Panc1 (cell line): ENCODE measurements at regions of chr11 and their contacts with region 1.

Region 1: DNA sequence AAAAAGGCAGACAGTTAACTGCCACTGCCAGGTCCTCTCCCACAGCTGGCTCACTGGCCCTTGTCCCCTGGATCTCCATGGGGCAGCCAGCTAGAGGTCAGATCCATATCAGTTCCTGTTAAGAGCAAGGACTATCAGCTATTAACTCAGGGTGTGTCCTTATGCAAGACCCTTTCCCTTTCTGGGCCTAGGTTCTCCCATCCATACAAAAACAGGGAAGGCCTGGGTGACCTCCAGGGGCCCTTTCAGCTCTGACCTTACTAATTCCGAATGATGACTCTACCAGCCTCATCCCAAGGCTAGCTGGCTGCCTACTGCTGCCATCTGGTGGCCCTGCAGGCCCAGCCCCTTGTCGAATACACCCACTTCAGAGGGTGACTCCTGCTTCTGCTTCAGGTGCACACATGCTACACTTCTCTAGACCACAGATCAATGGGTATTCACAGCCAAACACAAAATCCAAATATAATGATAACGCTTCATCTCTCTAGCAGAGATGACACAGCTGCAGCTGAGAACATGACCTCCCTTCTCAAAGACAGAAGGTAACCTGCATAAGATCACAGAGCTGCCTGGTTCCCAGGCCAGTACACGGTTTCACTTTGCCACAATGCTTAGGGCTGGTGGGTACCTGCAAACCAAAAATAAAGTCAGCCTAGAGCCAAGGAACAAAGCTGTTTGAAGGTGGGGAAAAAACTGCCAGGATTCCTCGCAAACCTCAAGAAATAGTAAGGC is 34.1 kb downstream of the SERGEF start:
- DNase-seq: peak; percentile 22
- ATAC-seq: peak; percentile 90
- H3K4me3 ChIP-seq: no peak overlapping the region
- H3K27ac ChIP-seq: no peak overlapping the region
- H3K4me1 ChIP-seq: no peaks in the 10 kb centered on the region
- H3K27me3 ChIP-seq: no peaks in the 10 kb centered on the region
- CTCF ChIP-seq: peak; percentile 87

Region 2: DNA sequence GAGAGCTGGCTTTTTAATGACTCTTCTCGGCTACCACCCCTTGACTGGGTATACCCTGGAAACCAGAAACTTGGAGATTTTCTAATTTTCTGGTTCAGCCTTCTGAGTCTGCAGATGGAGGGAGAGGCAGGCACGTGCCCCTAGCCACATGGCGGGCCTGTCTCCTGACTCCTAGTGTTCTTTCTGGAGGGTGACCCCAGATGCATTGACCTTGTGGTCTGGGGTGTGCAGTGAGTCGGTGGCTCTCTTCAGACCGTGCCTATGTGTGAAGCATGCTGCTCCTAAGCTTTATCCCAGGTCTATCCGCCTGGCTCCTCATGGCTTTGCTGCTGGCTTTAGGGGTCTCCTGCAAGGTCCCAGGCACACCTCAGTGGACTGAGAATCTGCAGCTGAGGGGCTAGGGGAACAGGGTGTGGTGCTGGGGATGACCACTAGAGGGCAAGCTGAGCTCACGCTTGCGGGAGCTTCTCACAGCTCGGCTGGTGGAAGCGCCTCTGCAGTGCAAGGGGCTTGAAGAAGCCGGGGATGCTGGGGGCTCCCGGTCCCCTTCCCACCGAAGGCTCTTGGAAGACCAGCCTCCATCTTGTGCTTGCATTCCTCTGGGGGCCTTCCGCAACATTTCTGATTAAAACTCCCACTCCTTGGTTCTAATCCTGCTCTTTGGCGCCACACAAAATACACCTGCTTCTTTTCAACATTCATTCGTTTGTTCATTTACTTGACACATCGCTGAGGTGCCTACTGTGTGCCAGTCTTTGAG is 379.8 kb before region 1 on chr11:
- CTCF ChIA-PET with region 1: interaction called, 6 read pairs
- POLR2A ChIA-PET with region 1: no interaction called
- in situ Hi-C with region 1: no loop called
- intact Hi-C with region 1: loop called (anchors 5 kb)
- DNase-seq: peak; percentile 55
- ATAC-seq: peak; percentile 92
- H3K4me3 ChIP-seq: no peak overlapping the region
- H3K27ac ChIP-seq: no peak overlapping the region
- H3K4me1 ChIP-seq: no peaks in the 10 kb centered on the region
- H3K27me3 ChIP-seq: no peaks in the 10 kb centered on the region
- CTCF ChIP-seq: peak; percentile 96

Region 3: DNA sequence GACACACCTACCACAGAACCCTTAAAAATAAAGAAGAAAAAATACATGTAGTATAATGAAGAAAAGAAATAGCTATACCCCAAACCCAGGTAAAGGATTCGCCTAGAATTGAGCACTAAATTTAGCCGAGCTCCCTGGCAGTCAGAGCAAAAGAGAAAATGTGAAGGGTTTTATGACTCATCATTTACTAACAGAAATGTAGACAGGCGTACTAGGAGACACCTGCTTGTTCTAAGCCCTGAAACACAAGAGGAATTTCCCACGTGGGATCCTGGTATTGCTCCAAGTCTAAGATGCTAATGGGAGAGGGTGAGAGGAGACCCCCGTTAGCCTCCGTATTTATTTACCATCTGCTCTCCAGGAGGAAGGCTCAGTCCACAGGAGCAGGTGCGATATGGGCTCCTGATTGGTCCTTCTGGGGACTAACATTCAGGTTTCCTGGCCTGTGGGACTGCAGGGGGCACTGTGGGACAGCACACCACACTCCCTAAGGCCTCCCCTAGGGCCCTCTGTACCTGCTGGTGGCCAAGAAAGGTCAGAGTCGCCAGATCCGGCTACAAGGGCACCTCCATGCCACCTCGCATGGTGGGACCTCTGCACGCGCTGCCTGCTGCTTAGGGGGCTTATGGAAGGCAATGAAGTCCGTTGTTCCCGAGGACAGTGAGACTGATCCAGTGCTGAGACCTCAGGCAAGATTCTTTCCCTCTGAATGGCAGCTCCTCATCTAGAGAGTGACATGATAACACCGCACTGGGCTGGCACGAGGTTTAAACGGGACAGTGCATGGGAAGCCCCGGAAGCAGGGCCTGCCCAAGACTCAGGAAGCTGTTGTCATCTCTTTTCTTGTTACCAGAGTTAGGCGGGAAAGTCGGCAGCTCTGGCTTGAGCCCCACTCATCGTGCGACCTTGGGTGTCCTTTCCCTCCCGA is 218.4 kb before region 1 on chr11:
- CTCF ChIA-PET with region 1: interaction called, 7 read pairs
- POLR2A ChIA-PET with region 1: no interaction called
- in situ Hi-C with region 1: no loop called
- intact Hi-C with region 1: loop called (anchors 2 kb)
- DNase-seq: peak; percentile 28
- ATAC-seq: peak; percentile 91
- H3K4me3 ChIP-seq: no peak overlapping the region
- H3K27ac ChIP-seq: no peak overlapping the region
- H3K4me1 ChIP-seq: no peaks in the 10 kb centered on the region
- H3K27me3 ChIP-seq: no peaks in the 10 kb centered on the region
- CTCF ChIP-seq: peak; percentile 75

Region 4: DNA sequence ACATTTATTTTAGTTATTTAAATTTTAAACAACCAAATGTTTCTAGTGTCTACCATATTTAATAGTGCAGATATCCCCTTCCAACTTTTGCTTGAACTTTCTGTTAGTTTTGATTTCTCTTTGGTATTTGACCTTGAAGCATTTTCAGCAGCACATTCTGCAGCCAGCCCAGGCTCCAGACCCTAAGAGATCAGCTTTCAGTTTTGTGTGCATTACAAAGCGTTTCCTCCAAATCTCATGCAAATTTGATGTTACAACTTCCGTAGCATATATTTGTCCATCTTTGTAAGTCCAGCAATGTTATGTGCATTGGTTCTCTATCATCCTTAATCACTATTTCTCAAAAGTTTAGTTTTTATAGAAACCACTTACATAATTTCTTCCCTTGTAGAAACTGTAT is 48.8 kb after region 1 on chr11:
- CTCF ChIA-PET with region 1: no interaction called
- POLR2A ChIA-PET with region 1: no interaction called
- in situ Hi-C with region 1: no loop called
- intact Hi-C with region 1: no loop called
- DNase-seq: no peak
- ATAC-seq: no peak
- H3K4me3 ChIP-seq: no peak overlapping the region
- H3K27ac ChIP-seq: no peak overlapping the region
- H3K4me1 ChIP-seq: no peaks in the 10 kb centered on the region
- H3K27me3 ChIP-seq: peaks cover 12% of the 10 kb centered on the region
- CTCF ChIP-seq: no peak

Region 5: GRCh38 chr11:19101796-19102520 is 1123.2 kb after region 1 on chr11:
- CTCF ChIA-PET with region 1: no interaction called
- POLR2A ChIA-PET with region 1: no interaction called
- in situ Hi-C with region 1: no loop called
- intact Hi-C with region 1: no loop called
- DNase-seq: no peak
- ATAC-seq: no peak
- H3K4me3 ChIP-seq: no peak overlapping the region
- H3K27ac ChIP-seq: no peak overlapping the region
- H3K4me1 ChIP-seq: no peaks in the 10 kb centered on the region
- H3K27me3 ChIP-seq: peaks cover 6% of the 10 kb centered on the region
- CTCF ChIP-seq: no peak